CD4-positive, alpha-beta T cell (primary cell): ENCODE measurements at regions of chr16 and their contacts with region 1.

Region 1: GRCh38 chr16:56293989-56294388 is 102.7 kb downstream of the GNAO1 start:
- DNase-seq: no peak
- ATAC-seq: no peak
- H3K4me3 ChIP-seq: no peak overlapping the region
- H3K4me3 Mint-ChIP-seq: no peak overlapping the region
- H3K27ac ChIP-seq: no peak overlapping the region
- H3K27ac Mint-ChIP-seq: no peak overlapping the region
- H3K4me1 ChIP-seq: peaks cover 3% of the 10 kb centered on the region
- H3K4me1 Mint-ChIP-seq: no peaks in the 10 kb centered on the region
- H3K27me3 ChIP-seq: no peaks in the 10 kb centered on the region
- H3K27me3 Mint-ChIP-seq: no peaks in the 10 kb centered on the region
- CTCF ChIP-seq: no peak

Region 2: GRCh38 chr16:56246051-56246817 is 47.8 kb before region 1 on chr16:
- CTCF ChIA-PET with region 1: no interaction called
- POLR2A ChIA-PET with region 1: no interaction called
- intact Hi-C with region 1: no loop called
- DNase-seq: no peak
- ATAC-seq: no peak
- H3K4me3 ChIP-seq: no peak overlapping the region
- H3K4me3 Mint-ChIP-seq: no peak overlapping the region
- H3K27ac ChIP-seq: no peak overlapping the region
- H3K27ac Mint-ChIP-seq: no peak overlapping the region
- H3K4me1 ChIP-seq: no peaks in the 10 kb centered on the region
- H3K4me1 Mint-ChIP-seq: no peaks in the 10 kb centered on the region
- H3K27me3 ChIP-seq: no peaks in the 10 kb centered on the region
- H3K27me3 Mint-ChIP-seq: no peaks in the 10 kb centered on the region
- CTCF ChIP-seq: no peak

Region 3: GRCh38 chr16:56273615-56274014 is 20.4 kb before region 1 on chr16:
- CTCF ChIA-PET with region 1: no interaction called
- POLR2A ChIA-PET with region 1: no interaction called
- intact Hi-C with region 1: loop called in 1 of 2 experiments (anchors 1 kb)
- DNase-seq: no peak
- ATAC-seq: no peak
- H3K4me3 ChIP-seq: no peak overlapping the region
- H3K4me3 Mint-ChIP-seq: no peak overlapping the region
- H3K27ac ChIP-seq: no peak overlapping the region
- H3K27ac Mint-ChIP-seq: no peak overlapping the region
- H3K4me1 ChIP-seq: peaks cover 14% of the 10 kb centered on the region
- H3K4me1 Mint-ChIP-seq: peaks cover 3% of the 10 kb centered on the region
- H3K27me3 ChIP-seq: peaks cover 0 to 3% of the 10 kb centered on the region in 2 experiments
- H3K27me3 Mint-ChIP-seq: no peaks in the 10 kb centered on the region
- CTCF ChIP-seq: no peak